ENCODE measurements at regions of chr4 and their contacts with region 1.

Region 1: DNA sequence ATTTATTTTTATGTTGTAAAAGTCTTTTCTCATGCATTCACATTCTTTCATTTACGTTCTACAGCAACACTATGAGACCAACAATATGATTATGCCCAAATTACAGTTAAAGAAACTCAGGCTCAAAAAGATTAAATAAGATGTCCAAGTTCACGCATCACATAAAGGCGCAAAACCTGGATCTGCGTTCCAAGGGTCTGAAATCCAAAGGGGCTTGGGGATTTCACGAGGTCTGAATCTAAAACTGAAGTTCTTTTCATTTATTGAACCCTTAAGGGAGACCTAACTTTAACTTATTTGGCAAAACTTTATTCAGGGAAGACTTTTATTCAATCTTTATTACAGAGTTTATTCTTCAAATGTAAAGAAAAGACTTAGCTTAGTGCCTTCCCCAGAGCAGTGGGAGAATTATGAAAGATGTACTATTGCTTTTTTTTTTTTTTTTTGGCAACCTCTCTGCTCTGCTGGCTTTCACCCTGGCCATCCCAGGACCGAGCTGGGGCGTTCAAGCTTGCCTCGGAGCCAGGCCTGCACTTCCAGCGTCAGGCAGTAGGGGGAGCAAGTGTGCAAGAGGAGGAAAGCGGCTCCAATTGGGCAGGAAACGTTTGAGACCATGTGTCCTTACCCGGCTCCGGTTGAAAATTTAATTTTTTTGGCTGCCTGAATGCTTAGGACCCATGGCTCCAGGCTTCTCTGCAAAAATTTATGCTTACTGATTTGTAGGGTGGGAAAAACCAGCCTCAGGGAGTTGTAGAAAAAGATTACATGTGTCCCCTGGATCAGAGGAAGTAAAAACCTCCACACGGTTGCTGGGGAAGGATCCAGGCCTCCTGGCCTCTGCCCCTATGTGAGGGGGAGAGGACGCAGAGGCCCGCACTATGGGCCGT is 344.3 kb upstream of the KLF3 start:
- DNase-seq: peak; percentile 92 to 96 (median 93)
- ATAC-seq: peak; percentile 80 to 87 (median 82)
- H3K4me3 ChIP-seq: peak overlapping the region in 11 of 12 donors; percentile 4 to 49 (median 40)
- H3K27ac ChIP-seq: peak overlapping the region; percentile 77 to 95 (median 84)
- H3K4me1 ChIP-seq: peaks cover 0 to 46% (median 17%) of the 10 kb centered on the region in 12 donors
- H3K27me3 ChIP-seq: no peaks in the 10 kb centered on the region
- CTCF ChIP-seq: peak; percentile 97 to 99 (median 98)
- POLR2A ChIP-seq: no peak

Region 2: DNA sequence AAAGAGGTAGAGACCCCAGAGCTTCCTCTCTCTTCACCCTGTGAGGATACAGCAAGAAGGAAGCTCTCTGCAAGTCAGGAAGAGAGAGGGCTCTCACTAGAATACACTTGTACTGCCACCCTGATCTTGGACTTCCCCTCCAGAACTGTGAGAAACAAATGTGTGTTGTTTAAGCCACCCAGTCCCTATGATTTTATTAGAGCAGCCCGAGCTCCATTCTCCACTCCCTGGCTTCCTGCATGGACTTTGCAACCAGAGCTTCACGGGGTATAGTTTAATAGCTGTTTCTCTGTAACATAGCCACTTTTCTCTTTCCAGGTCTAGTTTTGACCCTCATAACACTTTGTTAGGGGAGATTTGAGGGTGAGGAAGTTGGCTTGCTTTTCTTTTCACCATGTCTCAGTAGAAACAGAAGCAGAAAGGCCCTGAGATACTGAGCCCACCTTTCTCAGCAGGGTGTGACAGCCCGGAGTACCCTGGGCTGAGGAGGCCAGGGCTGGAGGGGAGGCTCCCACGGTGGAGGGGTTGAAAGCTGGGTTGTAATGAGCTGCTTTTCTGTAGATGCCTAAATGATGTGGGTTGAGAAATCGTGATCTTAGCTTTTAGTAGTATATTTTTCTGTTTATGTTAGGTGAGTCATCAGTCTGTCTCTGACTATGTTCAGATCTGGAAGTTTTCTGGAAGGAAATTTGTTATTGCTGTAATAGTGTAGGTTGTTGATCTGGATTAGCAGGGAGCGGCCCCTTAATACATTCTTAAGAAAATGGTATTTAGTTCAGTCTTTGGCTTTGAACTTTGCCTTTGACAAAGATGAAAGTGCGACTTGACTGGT is 240.9 kb before region 1 on chr4:
- intact Hi-C with region 1: loop called in 2 of 10 experiments (anchors 10 kb)
- DNase-seq: no peak
- ATAC-seq: no peak
- H3K4me3 ChIP-seq: peak overlapping the region in 1 of 12 donors; percentile 5
- H3K27ac ChIP-seq: peak overlapping the region in 11 of 12 donors; percentile 33 to 92 (median 64)
- H3K4me1 ChIP-seq: peaks cover 2 to 95% (median 55%) of the 10 kb centered on the region in 12 donors
- H3K27me3 ChIP-seq: no peaks in the 10 kb centered on the region
- CTCF ChIP-seq: no peak
- POLR2A ChIP-seq: no peak

Region 3: GRCh38 chr4:38190717-38191178 is 129.0 kb before region 1 on chr4:
- intact Hi-C with region 1: loop called in 4 of 10 experiments (anchors 5 to 10 kb)
- DNase-seq: peak in 4 of 5 donors; percentile 65 to 79 (median 70)
- ATAC-seq: peak; percentile 94 to 96 (median 96)
- H3K4me3 ChIP-seq: no peak overlapping the region
- H3K27ac ChIP-seq: peak overlapping the region; percentile 6 to 95 (median 82)
- H3K4me1 ChIP-seq: peaks cover 0 to 51% (median 14%) of the 10 kb centered on the region in 12 donors
- H3K27me3 ChIP-seq: no peaks in the 10 kb centered on the region
- CTCF ChIP-seq: no peak
- POLR2A ChIP-seq: no peak

Region 4: DNA sequence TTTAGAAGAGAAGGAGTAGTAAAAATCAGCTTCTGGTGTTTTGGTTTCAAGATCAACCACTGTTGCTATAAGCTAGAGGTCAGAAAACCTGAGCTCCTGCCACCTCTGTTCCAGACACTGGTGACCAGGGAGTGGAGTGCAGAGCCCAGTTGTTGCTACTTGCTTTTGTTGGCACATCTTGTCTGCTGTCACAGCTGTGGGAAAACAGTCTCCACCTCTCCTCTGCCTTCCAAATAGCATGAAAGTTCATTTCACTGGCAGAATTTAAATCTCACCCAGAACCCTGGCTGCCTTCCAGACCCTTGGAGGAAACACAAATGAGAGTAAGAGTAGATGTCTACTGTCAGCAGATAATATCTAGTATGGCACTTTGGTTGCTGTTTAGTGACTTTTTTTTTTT is 46.8 kb after region 1 on chr4:
- intact Hi-C with region 1: no loop called
- DNase-seq: peak in 3 of 5 donors; percentile 14 to 53 (median 31)
- ATAC-seq: peak; percentile 70 to 90 (median 87)
- H3K4me3 ChIP-seq: no peak overlapping the region
- H3K27ac ChIP-seq: peak overlapping the region in 4 of 12 donors; percentile 16 to 47 (median 36)
- H3K4me1 ChIP-seq: peaks cover 0 to 28% (median 13%) of the 10 kb centered on the region in 12 donors
- H3K27me3 ChIP-seq: no peaks in the 10 kb centered on the region
- CTCF ChIP-seq: no peak
- POLR2A ChIP-seq: no peak

Region 5: GRCh38 chr4:38562751-38563198 is 243.1 kb after region 1 on chr4:
- intact Hi-C with region 1: loop called in 1 of 10 experiments (anchors 5 kb)
- DNase-seq: peak in 4 of 5 donors; percentile 55 to 68 (median 64)
- ATAC-seq: peak; percentile 79 to 96 (median 90)
- H3K4me3 ChIP-seq: no peak overlapping the region
- H3K27ac ChIP-seq: peak overlapping the region in 9 of 12 donors; percentile 28 to 77 (median 54)
- H3K4me1 ChIP-seq: peaks cover 0 to 42% (median 29%) of the 10 kb centered on the region in 12 donors
- H3K27me3 ChIP-seq: no peaks in the 10 kb centered on the region
- CTCF ChIP-seq: no peak
- POLR2A ChIP-seq: no peak

Region 6: DNA sequence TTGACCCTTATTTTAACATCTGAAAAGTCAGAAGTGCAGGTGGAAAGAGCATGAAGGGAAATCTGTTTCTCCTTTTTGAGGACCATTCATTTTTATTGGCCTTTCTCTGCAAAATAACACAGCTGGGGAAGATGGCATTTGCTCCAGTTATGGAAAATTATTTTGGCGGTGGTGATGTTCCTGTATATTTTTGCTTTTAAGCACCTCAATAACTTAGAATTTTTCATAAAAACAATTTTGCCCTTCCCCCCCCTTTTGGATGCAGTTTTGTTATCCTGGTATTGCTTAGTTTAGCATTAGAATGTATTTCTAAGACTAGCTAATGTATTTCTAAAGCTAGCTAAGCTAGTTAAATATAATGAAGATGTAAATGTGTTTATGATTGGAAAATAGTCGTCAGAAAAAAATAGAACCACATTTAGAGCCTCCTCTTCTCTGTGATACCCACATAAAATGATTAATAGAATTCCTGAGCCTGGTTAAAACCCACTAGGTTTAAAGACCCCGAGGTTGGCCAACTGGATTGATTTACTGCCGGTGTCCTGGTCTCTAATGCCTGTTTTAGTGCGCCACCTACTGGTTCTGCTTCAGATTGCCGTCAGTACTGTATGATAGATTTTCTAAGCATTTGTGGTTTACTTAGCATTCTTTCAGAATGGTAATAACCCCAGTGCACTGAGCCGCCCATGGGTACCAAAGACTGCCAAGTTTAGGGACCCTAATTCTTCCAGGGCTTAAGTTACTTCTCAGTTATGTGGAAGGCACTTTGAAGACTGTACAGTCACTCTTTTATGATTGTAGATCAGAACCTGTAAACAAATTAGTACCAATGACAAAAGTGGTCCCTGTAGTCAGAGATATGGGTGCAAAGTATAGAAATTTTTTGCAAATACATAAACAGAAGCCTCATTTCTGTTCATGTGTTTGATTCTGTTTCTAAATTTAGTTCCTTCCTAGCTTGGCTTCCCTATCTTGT is 355.7 kb after region 1 on chr4:
- intact Hi-C with region 1: loop called (anchors 1 to 5 kb)
- DNase-seq: peak in 4 of 5 donors; percentile 68 to 78 (median 76)
- ATAC-seq: peak in 3 of 4 donors; percentile 40 to 45 (median 42)
- H3K4me3 ChIP-seq: peak overlapping the region in 4 of 12 donors; percentile 2 to 42 (median 18)
- H3K27ac ChIP-seq: peak overlapping the region in 10 of 12 donors; percentile 97 to 100 (median 99)
- H3K4me1 ChIP-seq: peaks cover 30 to 91% (median 81%) of the 10 kb centered on the region in 12 donors
- H3K27me3 ChIP-seq: no peaks in the 10 kb centered on the region
- CTCF ChIP-seq: peak; percentile 84 to 97 (median 92)
- POLR2A ChIP-seq: no peak